Right cardiac atrium (tissue), 5 donors: ENCODE measurements at regions of chr6 and their contacts with region 1.

Region 1: DNA sequence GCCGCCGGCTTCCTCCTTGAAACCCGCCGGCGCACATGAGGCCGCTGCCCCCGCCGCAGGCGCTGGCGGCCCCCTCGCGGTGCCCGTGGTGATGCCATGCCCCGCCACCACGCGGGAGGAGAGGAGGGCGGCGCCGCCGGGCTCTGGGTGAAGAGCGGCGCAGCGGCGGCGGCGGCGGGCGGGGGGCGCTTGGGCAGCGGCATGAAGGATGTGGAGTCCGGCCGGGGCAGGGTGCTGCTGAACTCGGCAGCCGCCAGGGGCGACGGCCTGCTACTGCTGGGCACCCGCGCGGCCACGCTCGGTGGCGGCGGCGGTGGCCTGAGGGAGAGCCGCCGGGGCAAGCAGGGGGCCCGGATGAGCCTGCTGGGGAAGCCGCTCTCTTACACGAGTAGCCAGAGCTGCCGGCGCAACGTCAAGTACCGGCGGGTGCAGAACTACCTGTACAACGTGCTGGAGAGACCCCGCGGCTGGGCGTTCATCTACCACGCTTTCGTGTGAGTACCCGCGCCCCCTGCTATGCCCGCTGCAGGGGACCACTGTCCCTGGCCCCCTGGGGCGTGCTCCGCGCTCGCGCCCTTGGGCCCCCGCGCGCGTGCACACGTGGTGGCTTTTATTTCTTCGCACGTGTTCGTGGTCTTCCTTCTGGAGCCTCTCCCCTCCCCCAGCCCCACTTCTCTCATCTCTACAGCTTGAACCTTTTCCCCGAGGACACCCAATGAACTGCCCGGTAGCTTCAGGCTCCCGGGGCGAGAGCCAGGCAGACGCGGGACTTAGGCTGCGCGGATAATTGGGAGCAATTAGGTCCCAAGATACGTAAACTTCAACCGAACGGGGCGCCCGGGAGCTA is 453 bp downstream of the KCNQ5 start:
- DNase-seq: peak; percentile 31 to 68 (median 67)
- ATAC-seq: peak; percentile 43 to 60
- H3K4me3 ChIP-seq: peak overlapping the region; percentile 58
- H3K27ac ChIP-seq: no peak overlapping the region
- H3K4me1 ChIP-seq: peaks cover 5% of the 10 kb centered on the region
- H3K27me3 ChIP-seq: no peaks in the 10 kb centered on the region

Region 2: DNA sequence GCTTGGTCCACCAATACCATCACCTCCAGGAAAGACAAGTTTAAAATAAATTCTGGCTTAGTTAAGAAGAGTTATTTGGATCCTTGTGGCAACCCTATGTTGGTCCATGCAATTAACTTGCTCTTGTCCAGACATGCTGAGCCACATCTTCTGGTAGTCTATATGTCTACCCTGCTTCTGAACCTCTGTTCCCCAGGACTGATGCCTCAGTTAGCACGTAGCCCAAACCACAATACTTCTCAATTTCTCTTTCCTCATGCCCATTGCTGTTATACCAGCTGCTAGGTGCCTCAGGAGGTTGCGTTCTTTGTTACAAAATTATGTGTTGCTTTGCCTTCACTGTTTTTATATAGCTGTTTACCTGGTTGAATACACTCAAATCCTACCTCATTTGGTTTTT is 116.9 kb before region 1 on chr6:
- intact Hi-C with region 1: no loop called
- DNase-seq: no peak
- ATAC-seq: no peak
- H3K4me3 ChIP-seq: no peak overlapping the region
- H3K27ac ChIP-seq: no peak overlapping the region
- H3K4me1 ChIP-seq: no peaks in the 10 kb centered on the region
- H3K27me3 ChIP-seq: no peaks in the 10 kb centered on the region

Region 3: DNA sequence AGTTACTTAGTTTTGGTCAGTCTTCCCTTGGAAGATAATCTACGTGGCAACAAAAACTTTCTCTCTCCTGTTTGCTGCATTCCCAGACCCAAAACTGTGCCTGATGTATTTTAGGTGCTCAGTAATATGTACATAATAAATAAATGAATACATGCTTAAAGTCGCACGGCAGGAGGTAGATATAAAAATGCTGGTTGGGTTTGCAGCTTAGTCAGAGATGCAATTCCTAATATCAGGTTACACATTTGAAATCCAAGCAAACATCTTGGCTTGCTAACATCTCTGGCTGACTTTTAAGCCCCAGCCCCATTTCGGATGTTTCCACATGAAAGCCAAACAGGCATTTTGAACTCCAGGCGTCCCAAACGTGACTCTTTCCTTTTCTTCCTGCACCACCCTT is 90.6 kb after region 1 on chr6:
- intact Hi-C with region 1: no loop called
- DNase-seq: no peak
- ATAC-seq: no peak
- H3K4me3 ChIP-seq: no peak overlapping the region
- H3K27ac ChIP-seq: no peak overlapping the region
- H3K4me1 ChIP-seq: no peaks in the 10 kb centered on the region
- H3K27me3 ChIP-seq: no peaks in the 10 kb centered on the region

Region 4: GRCh38 chr6:73116330-73116729 is 494.0 kb after region 1 on chr6:
- intact Hi-C with region 1: loop called in 2 of 4 experiments (anchors 5 to 10 kb)
- DNase-seq: no peak
- ATAC-seq: no peak
- H3K4me3 ChIP-seq: no peak overlapping the region
- H3K27ac ChIP-seq: no peak overlapping the region
- H3K4me1 ChIP-seq: no peaks in the 10 kb centered on the region
- H3K27me3 ChIP-seq: no peaks in the 10 kb centered on the region

Region 5: DNA sequence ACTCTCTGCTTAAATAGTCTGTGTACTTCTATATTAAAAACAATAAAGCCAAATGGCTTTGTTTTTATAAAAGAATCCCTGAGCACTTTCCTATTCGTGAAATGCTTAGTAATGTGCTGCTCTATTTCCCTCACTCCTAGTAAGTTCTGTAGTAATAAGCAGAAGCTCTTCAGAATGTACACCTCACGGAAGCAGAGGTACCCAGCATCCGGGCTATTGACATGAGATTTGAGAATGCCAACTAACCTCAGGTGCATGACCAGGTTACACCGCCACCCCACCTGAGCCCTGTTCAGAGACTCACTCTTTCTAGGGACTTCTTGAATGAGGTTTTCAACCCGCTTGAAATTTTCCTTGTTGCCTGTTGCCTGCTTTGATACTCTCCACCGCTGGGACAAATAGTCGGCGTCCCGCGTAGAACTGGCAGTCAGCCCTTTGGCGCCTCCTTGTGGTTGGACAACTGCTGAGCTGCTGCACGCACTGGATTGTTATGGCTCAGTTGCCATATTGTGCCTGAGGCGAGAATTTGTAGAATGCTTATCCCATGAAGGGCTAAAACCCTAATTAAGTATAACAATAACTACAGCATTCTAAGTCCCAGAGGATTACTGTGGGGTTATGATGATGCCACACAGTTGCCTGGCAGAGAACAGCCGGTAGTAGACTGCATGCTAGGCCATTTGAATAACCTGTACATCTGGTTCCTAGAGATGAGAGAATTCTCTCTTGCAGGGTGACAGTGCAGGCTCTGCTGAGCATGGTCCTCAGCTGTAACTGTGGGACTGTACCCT is 507.5 kb after region 1 on chr6:
- intact Hi-C with region 1: loop called (anchors 5 to 10 kb)
- DNase-seq: peak; percentile 83 to 93 (median 88)
- ATAC-seq: peak; percentile 82 to 90
- H3K4me3 ChIP-seq: no peak overlapping the region
- H3K27ac ChIP-seq: no peak overlapping the region
- H3K4me1 ChIP-seq: no peaks in the 10 kb centered on the region
- H3K27me3 ChIP-seq: no peaks in the 10 kb centered on the region

Region 6: GRCh38 chr6:73180763-73181619 is 558.7 kb after region 1 on chr6:
- intact Hi-C with region 1: loop called in 2 of 4 experiments (anchors 10 kb)
- DNase-seq: peak in 2 of 3 donors; percentile 55 to 64
- ATAC-seq: peak; percentile 84 to 88
- H3K4me3 ChIP-seq: peak overlapping the region; percentile 39
- H3K27ac ChIP-seq: no peak overlapping the region
- H3K4me1 ChIP-seq: no peaks in the 10 kb centered on the region
- H3K27me3 ChIP-seq: no peaks in the 10 kb centered on the region